ENCODE measurements at regions of chr3 and their contacts with region 1.

Region 1: GRCh38 chr3:59575113-59576001 is 525.5 kb upstream of the CFAP20DC start:
- DNase-seq: peak; percentile 57
- H3K4me3 ChIP-seq: no peak overlapping the region
- H3K27ac ChIP-seq: no peak overlapping the region
- H3K27me3 ChIP-seq: no peaks in the 10 kb centered on the region
- CTCF ChIP-seq: peak; percentile 93

Region 2: GRCh38 chr3:59212128-59212779 is 363.1 kb before region 1 on chr3:
- CTCF ChIA-PET with region 1: interaction called, 17 read pairs
- POLR2A ChIA-PET with region 1: no interaction called
- DNase-seq: peak; percentile 16
- H3K4me3 ChIP-seq: no peak overlapping the region
- H3K27ac ChIP-seq: no peak overlapping the region
- H3K27me3 ChIP-seq: no peaks in the 10 kb centered on the region
- CTCF ChIP-seq: peak; percentile 71

Region 3: DNA sequence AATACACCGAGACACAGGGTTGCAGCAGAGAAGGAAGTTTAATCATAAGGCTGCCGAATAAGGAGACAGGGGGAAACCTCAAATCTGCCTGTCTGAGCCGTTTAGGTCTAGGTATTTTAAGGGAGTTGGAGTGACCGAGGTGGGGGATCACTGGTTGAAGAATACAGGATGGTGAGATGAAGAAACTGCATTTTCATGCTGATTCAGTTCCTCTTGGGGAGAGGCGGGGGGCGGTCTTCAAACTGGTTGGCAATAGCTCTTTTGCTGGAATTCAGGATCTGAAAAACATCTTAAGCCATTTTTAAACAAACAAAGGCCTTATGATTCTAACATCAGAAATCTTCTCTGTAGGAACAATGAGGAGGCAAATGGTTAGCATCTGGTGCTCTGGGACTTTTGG is 173.9 kb after region 1 on chr3:
- CTCF ChIA-PET with region 1: interaction called, 11 read pairs
- POLR2A ChIA-PET with region 1: no interaction called
- DNase-seq: peak; percentile 72
- H3K4me3 ChIP-seq: no peak overlapping the region
- H3K27ac ChIP-seq: peak overlapping the region; percentile 67
- H3K27me3 ChIP-seq: no peaks in the 10 kb centered on the region
- CTCF ChIP-seq: no peak

Region 4: GRCh38 chr3:59809710-59810444 is 234.5 kb after region 1 on chr3:
- CTCF ChIA-PET with region 1: interaction called, 30 read pairs
- POLR2A ChIA-PET with region 1: no interaction called
- DNase-seq: peak; percentile 18
- H3K4me3 ChIP-seq: no peak overlapping the region
- H3K27ac ChIP-seq: no peak overlapping the region
- H3K27me3 ChIP-seq: no peaks in the 10 kb centered on the region
- CTCF ChIP-seq: peak; percentile 61